ENCODE measurements at regions of chr5 and their contacts with region 1.

Region 1: GRCh38 chr5:173057062-173057924 is 1.1 kb downstream of the CREBRF start:
- DNase-seq: peak; percentile 96 to 98 (median 98)
- H3K4me3 ChIP-seq: peak overlapping the region; percentile 80
- H3K4me3 Mint-ChIP-seq: peak overlapping the region; percentile 95 to 97 (median 96)
- H3K27ac ChIP-seq: peak overlapping the region; percentile 83
- H3K27ac Mint-ChIP-seq: peak overlapping the region; percentile 88 to 96 (median 94)
- H3K4me1 ChIP-seq: peaks cover 32% of the 10 kb centered on the region
- H3K4me1 Mint-ChIP-seq: peaks cover 36 to 60% (median 49%) of the 10 kb centered on the region in 3 donors
- H3K27me3 ChIP-seq: no peaks in the 10 kb centered on the region
- H3K27me3 Mint-ChIP-seq: peaks cover 2 to 7% of the 10 kb centered on the region in 2 donors

Region 2: GRCh38 chr5:172194985-172195774 is 862.1 kb before region 1 on chr5:
- CTCF ChIA-PET with region 1: no interaction called
- POLR2A ChIA-PET with region 1: interaction called, 10 read pairs
- DNase-seq: no peak
- H3K4me3 ChIP-seq: no peak overlapping the region
- H3K4me3 Mint-ChIP-seq: no peak overlapping the region
- H3K27ac ChIP-seq: no peak overlapping the region
- H3K27ac Mint-ChIP-seq: no peak overlapping the region
- H3K4me1 ChIP-seq: no peaks in the 10 kb centered on the region
- H3K4me1 Mint-ChIP-seq: no peaks in the 10 kb centered on the region
- H3K27me3 ChIP-seq: no peaks in the 10 kb centered on the region
- H3K27me3 Mint-ChIP-seq: peaks cover 0 to 14% of the 10 kb centered on the region in 2 donors

Region 3: DNA sequence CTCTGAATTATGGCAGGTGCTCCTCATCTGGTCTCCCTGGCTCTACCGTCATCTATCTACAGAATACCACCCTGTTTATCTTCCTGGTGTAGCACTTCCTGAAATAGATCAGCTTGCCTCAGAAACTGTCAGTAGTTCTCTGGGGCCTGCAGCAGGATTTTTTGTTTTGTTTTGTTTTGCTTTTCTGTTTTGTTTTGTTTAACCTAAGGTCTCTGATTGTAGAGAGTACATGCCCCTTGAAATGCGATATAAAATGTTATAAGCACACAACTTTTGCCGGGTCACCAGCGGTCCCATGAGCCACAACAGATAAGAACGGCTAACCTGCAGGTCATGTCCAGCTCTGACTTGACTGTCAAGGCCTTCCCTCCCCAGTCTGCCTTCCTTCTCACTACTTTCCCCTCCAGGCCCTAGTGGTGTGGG is 27.8 kb before region 1 on chr5:
- CTCF ChIA-PET with region 1: no interaction called
- POLR2A ChIA-PET with region 1: no interaction called
- DNase-seq: peak in 1 of 5 donors; percentile 15
- H3K4me3 ChIP-seq: no peak overlapping the region
- H3K4me3 Mint-ChIP-seq: no peak overlapping the region
- H3K27ac ChIP-seq: peak overlapping the region; percentile 29
- H3K27ac Mint-ChIP-seq: no peak overlapping the region
- H3K4me1 ChIP-seq: peaks cover 27% of the 10 kb centered on the region
- H3K4me1 Mint-ChIP-seq: peaks cover 5 to 23% (median 15%) of the 10 kb centered on the region in 3 donors
- H3K27me3 ChIP-seq: no peaks in the 10 kb centered on the region
- H3K27me3 Mint-ChIP-seq: no peaks in the 10 kb centered on the region